K562 (cell line): ENCODE measurements at regions of chr20 and their contacts with region 1.

Region 1: DNA sequence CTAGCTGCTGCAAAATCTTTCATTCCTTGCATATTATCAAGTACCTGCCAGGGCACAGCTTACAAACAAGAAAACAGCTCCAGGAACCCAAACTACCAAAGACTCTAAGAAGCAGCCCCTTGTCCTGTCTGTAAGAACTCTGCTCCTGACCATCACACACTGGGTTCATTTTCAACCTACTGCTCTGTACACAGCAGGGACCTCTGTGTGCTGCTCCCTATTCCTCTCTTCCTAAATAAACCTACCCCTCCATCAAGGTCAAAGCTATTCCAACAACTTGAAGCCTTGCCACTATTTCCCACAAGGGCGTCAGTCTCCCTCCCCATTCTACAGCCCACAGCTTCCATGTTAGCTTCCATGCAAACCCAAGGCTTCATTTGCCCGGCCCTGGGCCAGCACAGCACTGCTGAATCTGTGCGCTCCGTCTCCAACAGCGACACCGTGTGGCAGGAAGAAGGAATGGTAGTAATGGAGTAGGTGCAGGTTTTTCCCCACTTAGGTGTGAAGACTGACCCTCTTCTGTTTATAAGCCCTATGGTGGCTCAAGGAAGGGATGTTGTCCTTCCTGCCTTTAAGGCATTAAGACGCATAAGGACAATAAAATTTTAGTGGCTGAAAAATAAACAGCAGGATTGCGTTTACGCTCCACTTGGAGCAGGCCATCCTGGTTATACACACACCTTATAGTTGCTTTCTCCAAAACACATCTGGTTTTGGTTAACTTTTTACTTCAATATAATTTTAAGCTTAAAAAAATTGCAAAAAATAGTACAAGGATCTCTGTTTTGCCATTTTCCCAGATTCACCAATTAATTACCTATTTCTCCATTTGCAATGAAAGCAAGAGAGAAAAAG is 115.2 kb upstream of the NXT1 start:
- DNase-seq: peak; percentile 61 to 75 (median 64)
- ATAC-seq: peak; percentile 99
- H3K4me3 ChIP-seq: no peak overlapping the region
- H3K27ac ChIP-seq: no peak overlapping the region
- H3K4me1 ChIP-seq: peaks cover 0 to 3% of the 10 kb centered on the region in 2 experiments; a peak in 1 of 5 replicates
- H3K27me3 ChIP-seq: no peaks in the 10 kb centered on the region
- CTCF ChIP-seq: peak; percentile 77 to 86 (median 78)
- EP300 ChIP-seq: no peak
- POLR2A ChIP-seq: no peak
- RAD21 ChIP-seq: peak; percentile 66 to 89

Region 2: DNA sequence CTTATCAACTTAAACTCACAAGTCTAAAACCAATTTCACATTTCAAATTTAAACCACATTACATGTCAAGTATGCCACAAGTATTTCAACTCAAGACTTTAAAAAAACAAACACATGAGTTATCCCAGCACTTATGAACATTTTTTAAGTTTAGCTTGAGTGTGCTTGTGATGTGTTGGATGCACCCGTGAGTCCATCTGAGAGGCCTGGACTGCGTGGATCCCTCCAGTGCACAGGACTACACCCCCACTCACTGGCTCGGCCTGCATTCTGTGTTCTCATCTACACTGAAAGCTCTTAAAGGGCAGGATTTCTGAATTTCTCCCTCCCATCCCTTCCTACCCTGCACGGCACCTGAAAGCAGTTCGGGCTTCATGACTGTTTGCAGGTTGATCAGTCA is 20.5 kb before region 1 on chr20:
- CTCF ChIA-PET with region 1: no interaction called
- POLR2A ChIA-PET with region 1: no interaction called
- in situ Hi-C with region 1: no loop called
- intact Hi-C with region 1: no loop called
- DNase-seq: no peak
- ATAC-seq: no peak
- H3K4me3 ChIP-seq: no peak overlapping the region
- H3K27ac ChIP-seq: no peak overlapping the region
- H3K4me1 ChIP-seq: no peaks in the 10 kb centered on the region
- H3K27me3 ChIP-seq: no peaks in the 10 kb centered on the region
- CTCF ChIP-seq: no peak
- EP300 ChIP-seq: no peak
- POLR2A ChIP-seq: no peak
- RAD21 ChIP-seq: no peak

Region 3: GRCh38 chr20:23340524-23340923 is 105.1 kb after region 1 on chr20:
- CTCF ChIA-PET with region 1: no interaction called
- POLR2A ChIA-PET with region 1: no interaction called
- in situ Hi-C with region 1: no loop called
- intact Hi-C with region 1: loop called (anchors 5 kb)
- DNase-seq: peak; percentile 19 to 77 (median 44)
- ATAC-seq: peak; percentile 92
- H3K4me3 ChIP-seq: no peak overlapping the region
- H3K27ac ChIP-seq: no peak overlapping the region
- H3K4me1 ChIP-seq: peaks cover 0 to 3% of the 10 kb centered on the region in 2 experiments; a peak in 2 of 5 replicates
- H3K27me3 ChIP-seq: no peaks in the 10 kb centered on the region
- CTCF ChIP-seq: peak; percentile 64 to 76 (median 67)
- EP300 ChIP-seq: no peak
- POLR2A ChIP-seq: no peak
- RAD21 ChIP-seq: peak; percentile 76 to 86